Right ventricle myocardium inferior (tissue), 1 donor: ENCODE measurements at regions of chr2 and their contacts with region 1.

Region 1: GRCh38 chr2:64988420-64989125 is 626 bp upstream of the SLC1A4 start:
- DNase-seq: peak; percentile 81
- ATAC-seq: peak; percentile 81

Region 2: DNA sequence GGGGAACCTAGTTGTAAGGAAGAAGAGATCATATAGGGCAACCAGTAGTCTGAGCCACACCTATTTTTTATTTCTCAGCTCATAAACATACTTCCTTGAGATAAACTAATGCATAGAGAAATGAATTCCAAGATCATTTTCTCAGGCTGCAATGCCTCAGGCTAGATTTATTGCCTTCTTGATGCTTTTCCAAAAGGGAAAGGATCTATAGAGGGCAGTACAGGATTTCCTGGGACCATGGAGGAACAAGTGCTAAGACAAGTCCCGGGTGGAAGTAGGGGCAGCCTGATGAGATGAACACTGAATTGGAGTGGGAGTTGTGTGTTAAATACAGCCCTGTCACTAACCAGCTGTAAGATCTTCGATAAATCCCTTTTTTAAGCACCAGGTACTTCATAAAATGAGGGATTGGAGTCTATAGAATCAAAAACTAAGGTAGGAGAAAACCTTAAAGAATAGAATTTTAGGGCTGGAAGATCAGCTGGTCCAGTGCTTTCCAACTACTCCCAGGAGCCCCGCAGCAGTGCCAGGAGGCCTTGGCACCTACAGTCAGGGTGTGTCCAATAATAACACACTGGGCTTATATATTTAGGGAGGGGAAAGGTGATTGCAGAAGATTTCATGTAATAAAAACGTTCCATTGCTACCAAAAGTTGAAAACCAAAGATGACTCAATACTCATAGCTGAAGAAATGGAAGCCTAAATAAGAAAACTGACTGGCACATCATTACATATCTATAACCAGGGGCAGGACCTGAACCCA is 393.0 kb before region 1 on chr2:
- intact Hi-C with region 1: no loop called
- DNase-seq: no peak
- ATAC-seq: no peak

Region 3: DNA sequence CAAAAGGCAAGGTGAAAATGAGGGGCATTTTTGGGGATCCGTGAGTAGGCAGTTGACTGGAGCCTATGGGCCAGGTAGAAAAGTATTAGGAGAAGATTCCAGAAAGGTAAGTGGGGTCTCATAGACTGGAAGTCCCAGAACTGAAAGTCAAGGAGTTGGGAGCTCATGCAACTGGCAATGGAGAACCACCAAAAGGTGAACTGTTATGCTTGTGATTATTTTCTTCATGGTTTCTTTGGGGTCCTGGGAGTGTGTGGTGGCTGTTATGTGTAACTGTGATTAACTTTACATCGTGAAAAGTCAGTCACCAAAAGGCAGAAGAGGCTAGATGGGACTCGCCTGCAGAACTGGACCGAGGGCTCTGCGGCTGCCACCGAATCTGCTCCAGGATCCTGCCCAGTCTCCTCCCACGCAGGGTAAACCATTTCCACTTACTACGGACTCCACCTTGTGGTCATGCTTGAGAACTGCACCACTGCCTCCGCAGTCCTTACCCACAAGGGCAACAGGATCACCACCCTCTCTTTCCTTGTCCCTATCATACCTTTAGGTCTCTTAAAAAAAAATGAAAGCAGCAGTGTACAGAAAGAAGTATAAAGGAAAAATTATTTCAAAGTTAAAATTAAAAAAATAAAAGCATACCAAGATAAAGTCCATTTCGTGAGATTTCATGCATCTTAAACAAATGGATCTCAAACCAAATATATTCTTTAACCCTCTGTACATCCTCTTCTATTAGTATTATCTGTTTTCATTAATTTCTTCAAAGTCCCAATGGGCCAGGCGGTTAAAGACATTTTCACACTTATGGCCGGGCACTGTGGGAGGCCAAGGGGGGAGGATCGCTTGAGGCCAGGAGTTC is 52.1 kb after region 1 on chr2:
- intact Hi-C with region 1: loop called (anchors 1 kb)
- DNase-seq: peak; percentile 87
- ATAC-seq: peak; percentile 98